Posterior vena cava (tissue), 2 donors: ENCODE measurements at regions of chr11 and their contacts with region 1.

Region 1: GRCh38 chr11:63023841-63024648 is 8.4 kb upstream of the SLC22A8 start:
- DNase-seq: peak; percentile 96

Region 2: DNA sequence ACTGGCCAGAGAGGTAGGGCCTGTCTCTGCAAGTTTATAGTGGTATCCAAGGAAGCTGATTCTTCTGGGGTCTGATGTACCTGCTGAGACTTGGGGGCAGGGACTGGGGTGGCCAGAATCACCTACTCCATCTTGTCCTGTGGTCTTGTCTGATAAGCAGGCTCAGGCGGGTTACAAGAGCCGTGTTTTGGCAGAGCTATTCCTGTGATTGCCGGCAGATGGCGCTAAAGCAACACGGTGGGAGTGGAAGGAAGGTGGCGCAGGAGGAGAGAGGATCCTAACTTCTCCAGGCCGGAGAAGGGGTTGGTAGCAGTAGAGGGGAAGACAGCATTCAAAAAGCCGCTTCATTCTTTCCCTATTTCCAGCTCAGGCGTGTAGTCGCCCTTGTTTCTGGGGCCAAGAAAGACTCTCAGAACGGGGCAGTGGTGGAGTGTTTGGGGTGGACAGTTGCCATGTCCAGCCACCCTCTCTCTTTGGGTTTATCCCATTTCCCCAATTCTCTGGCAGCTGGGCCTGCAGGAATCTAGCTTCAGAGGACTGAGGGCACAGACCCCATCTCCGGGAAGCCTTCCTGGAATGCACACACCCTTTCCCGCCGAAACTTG is 118.0 kb before region 1 on chr11:
- intact Hi-C with region 1: loop called (anchors 1 to 2 kb)
- DNase-seq: peak; percentile 92